Breast epithelium (tissue), 4 donors: ENCODE measurements at regions of chr1 and their contacts with region 1.

Region 1: DNA sequence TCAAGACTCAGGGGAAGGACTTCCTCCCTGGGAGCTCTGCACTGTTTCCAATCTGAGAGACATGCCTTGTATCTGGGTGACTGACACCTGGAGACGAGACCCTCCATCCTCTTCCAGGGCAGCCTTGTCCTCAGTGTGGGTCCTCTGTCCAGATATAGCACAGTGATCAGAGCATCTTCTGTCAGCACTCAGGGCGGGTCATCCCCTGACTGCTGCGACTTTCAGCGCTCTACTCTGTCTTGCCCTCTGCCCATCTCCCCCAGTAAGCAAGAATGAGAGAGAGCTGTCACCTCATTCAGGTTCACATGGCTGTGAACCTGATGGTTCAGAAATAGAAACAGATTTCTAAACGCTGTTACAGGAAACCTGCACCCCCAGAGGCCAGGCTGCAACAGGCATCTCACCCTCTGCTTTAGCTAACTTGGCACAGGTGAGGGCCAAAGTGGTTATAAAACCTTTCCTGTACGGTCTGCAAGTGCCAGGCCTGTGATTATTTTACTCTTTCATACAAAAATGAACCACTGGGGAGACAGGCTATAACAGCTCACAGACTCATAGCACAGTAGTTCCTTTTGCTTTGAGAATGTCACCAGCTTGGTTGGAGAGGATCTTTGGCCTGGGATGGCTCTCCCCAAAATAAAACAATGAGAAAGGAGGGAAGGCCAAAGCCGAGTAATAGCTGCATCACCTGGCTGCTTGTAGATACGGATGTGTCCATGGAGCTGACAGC is 11.4 kb upstream of the TENT5C start:
- DNase-seq: peak in 1 of 2 donors; percentile 58
- H3K4me3 ChIP-seq: no peak overlapping the region
- H3K27ac ChIP-seq: peak overlapping the region; percentile 59 to 69
- H3K4me1 ChIP-seq: peaks cover 0 to 12% of the 10 kb centered on the region in 2 donors
- H3K27me3 ChIP-seq: no peaks in the 10 kb centered on the region
- CTCF ChIP-seq: peak in 1 of 3 donors; percentile 39
- POLR2A ChIP-seq: no peak

Region 2: GRCh38 chr1:117582451-117582850 is 12.0 kb before region 1 on chr1:
- intact Hi-C with region 1: no loop called
- DNase-seq: no peak
- H3K4me3 ChIP-seq: no peak overlapping the region
- H3K27ac ChIP-seq: no peak overlapping the region
- H3K4me1 ChIP-seq: no peaks in the 10 kb centered on the region
- H3K27me3 ChIP-seq: no peaks in the 10 kb centered on the region
- CTCF ChIP-seq: no peak
- POLR2A ChIP-seq: no peak

Region 3: DNA sequence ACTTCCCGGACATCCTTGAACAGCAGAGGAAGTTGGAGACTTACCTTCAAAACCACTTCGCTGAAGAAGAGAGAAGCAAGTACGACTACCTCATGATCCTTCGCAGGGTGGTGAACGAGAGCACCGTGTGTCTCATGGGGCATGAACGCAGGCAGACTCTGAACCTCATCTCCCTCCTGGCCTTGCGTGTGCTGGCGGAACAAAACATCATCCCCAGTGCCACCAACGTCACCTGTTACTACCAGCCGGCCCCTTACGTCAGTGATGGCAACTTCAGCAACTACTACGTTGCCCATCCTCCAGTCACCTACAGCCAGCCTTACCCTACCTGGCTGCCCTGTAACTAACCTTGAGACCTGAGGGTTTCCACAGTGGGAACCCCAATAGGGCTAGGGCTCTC is 29.3 kb after region 1 on chr1:
- intact Hi-C with region 1: loop called (anchors 2 kb)
- DNase-seq: no peak
- H3K4me3 ChIP-seq: no peak overlapping the region
- H3K27ac ChIP-seq: no peak overlapping the region
- H3K4me1 ChIP-seq: no peaks in the 10 kb centered on the region
- H3K27me3 ChIP-seq: no peaks in the 10 kb centered on the region
- CTCF ChIP-seq: no peak
- POLR2A ChIP-seq: no peak